OCI-LY7 (cell line): ENCODE measurements at regions of chr1 and their contacts with region 1.

Region 1: GRCh38 chr1:160681067-160681890 is 30.3 kb downstream of the CD48 start:
- DNase-seq: peak; percentile 89
- H3K4me3 ChIP-seq: no peak overlapping the region
- H3K27ac ChIP-seq: no peak overlapping the region
- H3K4me1 ChIP-seq: peaks cover 39% of the 10 kb centered on the region
- CTCF ChIP-seq: peak; percentile 99

Region 2: GRCh38 chr1:160539990-160540858 is 141.1 kb before region 1 on chr1:
- CTCF ChIA-PET with region 1: no interaction called
- POLR2A ChIA-PET with region 1: no interaction called
- intact Hi-C with region 1: no loop called
- DNase-seq: peak; percentile 85
- H3K4me3 ChIP-seq: peak overlapping the region; percentile 35
- H3K27ac ChIP-seq: peak overlapping the region; percentile 85
- H3K4me1 ChIP-seq: peaks cover 58% of the 10 kb centered on the region
- CTCF ChIP-seq: no peak

Region 3: GRCh38 chr1:160711602-160712311 is 30.5 kb after region 1 on chr1 and contains the start of gene CD48:
- CTCF ChIA-PET with region 1: interaction called, 3 read pairs
- POLR2A ChIA-PET with region 1: interaction called, 11 read pairs
- intact Hi-C with region 1: no loop called
- DNase-seq: peak; percentile 88
- H3K4me3 ChIP-seq: peak within 1 kb of the TSS; percentile 77
- H3K27ac ChIP-seq: peak within 1 kb of the TSS; percentile 98
- H3K4me1 ChIP-seq: peaks cover 61% of the 10 kb centered on the region
- CTCF ChIP-seq: no peak
- total RNA-seq, gene CD48: 131 and 150 TPM in 2 replicates

Region 4: GRCh38 chr1:160726498-160727315 is 45.4 kb after region 1 on chr1:
- CTCF ChIA-PET with region 1: no interaction called
- POLR2A ChIA-PET with region 1: no interaction called
- intact Hi-C with region 1: loop called (anchors 1 kb)
- DNase-seq: peak; percentile 86
- H3K4me3 ChIP-seq: peak overlapping the region; percentile 12
- H3K27ac ChIP-seq: no peak overlapping the region
- H3K4me1 ChIP-seq: peaks cover 17% of the 10 kb centered on the region
- CTCF ChIP-seq: peak; percentile 99

Region 5: GRCh38 chr1:160738271-160738670 is 57.0 kb after region 1 on chr1:
- CTCF ChIA-PET with region 1: no interaction called
- POLR2A ChIA-PET with region 1: no interaction called
- intact Hi-C with region 1: no loop called
- DNase-seq: no peak
- H3K4me3 ChIP-seq: no peak overlapping the region
- H3K27ac ChIP-seq: no peak overlapping the region
- H3K4me1 ChIP-seq: peaks cover 21% of the 10 kb centered on the region
- CTCF ChIP-seq: no peak

Region 6: GRCh38 chr1:160768295-160768657 is 87.0 kb after region 1 on chr1:
- CTCF ChIA-PET with region 1: interaction called, 6 read pairs
- POLR2A ChIA-PET with region 1: interaction called, 6 read pairs
- intact Hi-C with region 1: loop called (anchors 1 kb)
- DNase-seq: peak; percentile 84
- H3K4me3 ChIP-seq: peak overlapping the region; percentile 62
- H3K27ac ChIP-seq: no peak overlapping the region
- H3K4me1 ChIP-seq: peaks cover 7% of the 10 kb centered on the region
- CTCF ChIP-seq: peak; percentile 90

Region 7: DNA sequence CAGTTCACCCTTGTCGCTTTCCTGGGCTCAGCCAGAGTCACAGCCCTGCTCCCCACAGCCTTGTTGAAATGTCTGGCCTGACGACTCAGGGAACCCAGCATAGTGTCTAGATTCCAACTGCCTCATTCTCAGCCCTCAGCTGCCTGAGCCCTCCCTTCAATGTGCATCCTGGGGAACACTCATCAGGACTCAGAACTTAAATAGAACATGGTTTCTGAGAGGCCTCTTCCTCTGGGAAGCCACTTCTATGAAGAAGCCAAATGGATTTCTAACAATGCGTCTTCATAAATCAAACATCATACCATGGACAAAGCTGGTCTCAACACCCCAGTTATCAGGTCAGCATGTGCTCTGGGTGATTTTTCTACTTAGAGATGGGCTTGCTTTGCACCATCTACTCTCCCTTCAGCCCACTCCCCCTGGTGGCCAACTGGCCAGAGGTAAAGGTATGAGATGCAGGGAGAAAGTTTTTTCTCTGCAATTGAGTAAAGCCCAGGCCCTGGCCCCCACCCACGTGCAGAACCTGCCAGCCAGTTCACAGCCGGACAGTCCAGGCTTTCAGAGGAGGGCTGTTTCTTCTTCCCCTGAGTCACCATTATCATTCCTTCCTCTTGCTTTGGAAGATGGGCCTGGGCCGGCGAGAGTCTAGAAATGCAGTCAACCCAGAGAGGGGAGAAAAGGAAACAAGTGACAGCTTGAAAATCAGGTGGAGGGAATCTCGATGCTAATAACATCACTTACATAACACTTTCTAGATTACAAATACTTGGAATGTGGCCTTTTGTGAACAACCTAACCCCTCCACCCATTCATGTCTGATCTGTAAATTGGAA is 149.3 kb after region 1 on chr1:
- CTCF ChIA-PET with region 1: no interaction called
- POLR2A ChIA-PET with region 1: no interaction called
- intact Hi-C with region 1: loop called (anchors 1 kb)
- DNase-seq: peak; percentile 80
- H3K4me3 ChIP-seq: no peak overlapping the region
- H3K27ac ChIP-seq: no peak overlapping the region
- H3K4me1 ChIP-seq: no peaks in the 10 kb centered on the region
- CTCF ChIP-seq: peak; percentile 92

Region 8: DNA sequence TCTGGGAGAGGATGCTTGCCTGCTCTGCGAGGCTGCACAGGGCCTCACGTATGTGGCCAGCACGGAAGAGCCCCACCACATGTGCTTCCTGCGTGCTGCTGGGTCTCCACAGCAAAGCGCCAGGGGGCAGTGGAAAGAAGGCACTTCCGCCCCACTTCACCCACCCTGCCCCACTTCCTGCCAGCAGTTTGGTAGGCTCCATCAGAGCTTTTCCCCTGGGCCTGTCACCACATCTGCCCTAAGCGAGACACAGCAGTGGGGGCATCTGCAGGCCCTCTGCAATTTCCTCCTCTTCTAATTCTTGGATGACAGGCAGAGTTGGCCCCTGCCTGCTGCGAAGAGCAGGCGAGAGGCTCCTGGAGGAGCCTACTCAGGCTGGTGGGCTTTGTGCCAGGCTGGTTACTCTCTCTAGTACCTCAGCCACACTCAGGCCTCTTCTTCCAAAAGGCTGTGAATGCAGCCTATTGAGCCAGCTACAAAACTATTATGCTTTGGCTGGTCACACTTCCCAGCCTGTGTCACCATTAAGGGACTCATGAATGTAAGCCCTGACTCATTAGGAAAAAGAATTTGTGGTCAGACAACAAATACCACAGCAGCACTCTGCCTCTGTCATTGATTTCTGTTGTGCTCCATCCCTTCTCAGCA is 156.4 kb after region 1 on chr1:
- CTCF ChIA-PET with region 1: no interaction called
- POLR2A ChIA-PET with region 1: interaction called, 3 read pairs
- intact Hi-C with region 1: loop called (anchors 1 kb)
- DNase-seq: peak; percentile 97
- H3K4me3 ChIP-seq: peak overlapping the region; percentile 10
- H3K27ac ChIP-seq: peak overlapping the region; percentile 63
- H3K4me1 ChIP-seq: peaks cover 39% of the 10 kb centered on the region
- CTCF ChIP-seq: peak; percentile 69

Region 9: DNA sequence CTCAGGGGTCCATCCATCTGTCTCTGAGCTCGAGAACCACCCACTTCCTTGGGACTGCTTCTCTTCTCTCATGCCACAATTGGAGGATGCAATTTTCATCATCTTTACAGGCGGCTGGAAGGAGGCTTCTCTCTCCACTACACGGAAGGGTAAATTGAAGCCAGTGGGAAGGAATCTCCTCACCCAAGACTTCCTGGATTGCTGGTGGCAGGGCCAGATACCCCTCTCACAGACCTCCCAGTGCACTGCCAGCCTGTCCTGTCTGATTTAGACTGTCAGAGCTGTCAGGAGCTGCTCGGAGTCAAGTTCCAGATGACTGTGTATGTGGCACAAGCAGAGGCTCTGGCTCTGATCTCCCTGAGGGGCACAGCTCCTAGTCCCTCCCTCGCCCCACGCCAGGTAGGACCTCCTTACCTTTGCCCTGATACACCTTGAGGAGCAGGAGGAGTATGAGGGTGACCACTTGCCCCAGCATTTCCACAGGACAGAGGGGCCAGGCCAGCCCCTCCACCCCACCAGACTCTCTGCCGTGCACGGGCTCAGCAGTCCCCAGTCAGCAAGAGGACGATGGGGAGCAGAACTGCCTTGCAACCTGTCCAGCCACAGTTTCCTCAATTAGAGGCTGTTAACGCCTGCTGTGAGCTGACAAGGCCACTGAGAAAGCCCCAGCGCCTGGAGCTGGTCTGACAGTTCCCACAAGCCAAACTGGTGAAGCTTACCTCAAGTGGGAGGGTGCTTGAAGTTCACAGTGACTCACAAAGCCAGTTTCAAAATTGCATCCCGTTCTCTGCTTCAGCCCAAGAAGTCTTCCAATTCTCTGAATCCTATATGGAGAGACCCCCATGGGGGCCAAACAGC is 181.2 kb after region 1 on chr1 and contains the start of gene CD244:
- CTCF ChIA-PET with region 1: no interaction called
- POLR2A ChIA-PET with region 1: no interaction called
- intact Hi-C with region 1: no loop called
- DNase-seq: no peak
- H3K4me3 ChIP-seq: no peak within 1 kb of the TSS
- H3K27ac ChIP-seq: no peak within 1 kb of the TSS
- H3K4me1 ChIP-seq: no peaks in the 10 kb centered on the region
- CTCF ChIP-seq: no peak
- total RNA-seq, gene CD244: not detected in 2 replicates

Region 10: DNA sequence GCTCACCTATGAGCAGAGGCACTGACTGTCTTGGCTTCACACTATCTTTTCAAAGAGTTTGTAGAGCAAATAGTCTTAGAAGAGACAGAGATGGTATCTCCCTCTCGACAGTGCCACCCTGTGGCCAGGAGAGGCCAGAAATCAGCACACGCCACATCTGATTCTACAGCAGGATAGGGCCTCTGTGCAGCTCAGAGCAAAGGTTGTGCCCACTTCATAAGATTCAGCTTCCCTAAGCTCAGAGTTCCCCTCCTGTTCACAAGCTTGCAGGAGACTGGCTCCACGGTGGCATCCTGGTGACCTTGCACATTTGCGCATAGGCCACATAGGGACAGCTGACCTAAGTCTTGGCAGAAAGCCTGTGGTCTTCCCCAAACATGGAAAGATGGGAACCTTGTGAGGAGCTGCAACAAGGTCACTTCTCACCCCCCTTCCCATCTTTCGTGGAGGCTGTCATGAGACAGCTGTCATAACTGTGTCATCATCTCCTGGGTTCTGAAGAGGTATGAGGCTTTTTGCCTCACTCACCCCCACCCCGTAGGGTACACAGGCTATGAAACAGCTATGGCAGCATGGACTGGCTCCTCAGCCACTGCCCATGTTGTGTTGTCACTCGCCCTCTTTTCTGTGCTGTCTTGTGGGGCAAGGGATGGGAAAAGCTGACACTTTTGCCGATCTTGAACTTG is 270.3 kb after region 1 on chr1:
- CTCF ChIA-PET with region 1: interaction called, 7 read pairs
- POLR2A ChIA-PET with region 1: no interaction called
- intact Hi-C with region 1: loop called (anchors 2 kb)
- DNase-seq: peak; percentile 80
- H3K4me3 ChIP-seq: no peak overlapping the region
- H3K27ac ChIP-seq: no peak overlapping the region
- H3K4me1 ChIP-seq: no peaks in the 10 kb centered on the region
- CTCF ChIP-seq: peak; percentile 93